ENCODE measurements at regions of chr5 and their contacts with region 1.

Region 1: DNA sequence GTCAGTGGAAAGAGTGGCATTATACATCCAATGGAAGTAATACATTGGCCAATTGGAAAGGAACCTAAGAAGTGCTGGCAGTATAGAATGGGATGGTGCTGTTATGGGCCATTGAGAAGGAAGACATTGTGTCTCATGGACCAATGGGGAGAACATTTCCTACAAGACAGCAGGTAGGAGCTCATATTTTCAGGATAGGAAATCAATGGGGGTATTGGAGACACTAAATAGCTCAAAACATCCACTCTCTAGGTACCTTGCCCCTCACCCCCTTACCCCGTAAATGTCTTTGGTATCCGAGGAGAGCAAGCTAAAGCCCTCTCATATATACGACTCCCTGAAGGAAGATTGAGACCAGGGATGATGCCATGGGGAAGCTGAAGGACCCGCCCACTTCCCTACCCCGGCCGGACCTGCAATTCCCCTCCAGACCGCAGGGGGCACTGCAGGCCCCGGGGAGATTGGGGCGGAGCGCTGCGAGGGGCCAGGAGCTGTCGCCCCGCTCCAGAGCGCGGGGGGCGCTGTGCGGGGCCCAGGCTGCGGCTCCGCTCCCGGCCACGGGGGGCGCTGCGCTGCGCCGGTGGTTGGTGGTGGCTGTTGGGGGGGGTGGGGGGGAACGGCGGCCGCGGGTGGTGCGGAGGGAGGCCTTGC is at the start of gene KDM3B:
- DNase-seq: peak; percentile 94
- ATAC-seq: peak; percentile 76
- H3K4me3 Mint-ChIP-seq: peak within 1 kb of the TSS; percentile 99
- H3K27ac Mint-ChIP-seq: peak within 1 kb of the TSS; percentile 96
- H3K4me1 Mint-ChIP-seq: peaks cover 44% of the 10 kb centered on the region
- H3K27me3 Mint-ChIP-seq: no peaks in the 10 kb centered on the region
- total RNA-seq, gene KDM3B: 39.0 to 40.9 TPM

Region 2: GRCh38 chr5:138000102-138000723 is 352.0 kb before region 1 on chr5:
- CTCF ChIA-PET with region 1: no interaction called
- POLR2A ChIA-PET with region 1: no interaction called
- intact Hi-C with region 1: no loop called
- DNase-seq: no peak
- ATAC-seq: no peak
- H3K4me3 Mint-ChIP-seq: no peak overlapping the region
- H3K27ac Mint-ChIP-seq: no peak overlapping the region
- H3K4me1 Mint-ChIP-seq: peaks cover 37% of the 10 kb centered on the region
- H3K27me3 Mint-ChIP-seq: no peaks in the 10 kb centered on the region

Region 3: DNA sequence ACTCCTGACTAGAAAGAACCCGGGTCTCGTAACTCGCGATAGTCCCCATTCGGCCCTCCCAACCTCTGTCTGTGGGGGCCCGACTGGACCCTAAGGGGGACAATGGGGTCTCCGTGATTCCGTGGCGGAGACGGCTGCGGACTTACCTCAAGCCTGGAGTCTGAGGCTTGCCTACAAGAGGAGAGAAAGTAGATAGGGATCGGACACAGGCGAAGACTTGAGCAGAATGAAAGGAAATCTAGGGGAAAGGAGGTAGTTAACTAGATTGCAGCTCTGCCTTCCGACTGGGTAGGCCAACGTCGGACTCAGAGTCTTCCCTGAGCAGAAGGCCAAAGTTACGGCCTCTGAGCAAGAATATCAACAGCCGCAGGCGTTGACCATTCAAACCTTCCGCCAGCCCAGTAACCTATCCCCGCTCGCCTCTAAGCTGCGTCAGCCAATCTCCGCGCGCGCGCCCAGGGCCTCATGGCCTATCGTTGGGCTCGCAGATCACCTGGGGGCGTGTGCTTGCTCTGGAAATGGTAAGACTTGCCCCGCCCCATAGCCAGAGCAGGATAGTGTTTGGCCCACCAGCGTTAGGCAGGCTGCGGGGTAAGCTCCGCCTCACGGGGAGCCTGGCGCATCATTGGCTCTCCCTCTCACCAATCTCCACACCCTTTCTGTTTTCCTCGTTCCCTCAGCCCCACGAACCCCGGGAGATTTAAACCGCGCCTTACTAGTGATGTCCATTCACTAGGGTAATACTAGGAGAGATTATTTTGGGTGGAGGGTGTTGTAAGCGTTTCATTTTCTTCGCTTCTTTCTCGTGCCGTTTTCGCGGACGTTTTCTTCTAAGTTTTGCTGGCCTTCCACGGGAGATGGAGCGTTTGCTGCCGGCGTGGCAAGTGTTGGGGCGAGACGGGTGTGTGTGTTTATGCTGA is 20.5 kb before region 1 on chr5 and contains the start of gene CDC25C:
- CTCF ChIA-PET with region 1: interaction called, 308 read pairs
- POLR2A ChIA-PET with region 1: interaction called, 73 read pairs
- intact Hi-C with region 1: loop called (anchors 1 to 2 kb)
- DNase-seq: peak; percentile 98
- ATAC-seq: peak; percentile 100
- H3K4me3 Mint-ChIP-seq: peak within 1 kb of the TSS; percentile 86
- H3K27ac Mint-ChIP-seq: peak within 1 kb of the TSS; percentile 87
- H3K4me1 Mint-ChIP-seq: peaks cover 22% of the 10 kb centered on the region
- H3K27me3 Mint-ChIP-seq: no peaks in the 10 kb centered on the region
- total RNA-seq, gene CDC25C: 15.9 to 19.0 TPM

Region 4: DNA sequence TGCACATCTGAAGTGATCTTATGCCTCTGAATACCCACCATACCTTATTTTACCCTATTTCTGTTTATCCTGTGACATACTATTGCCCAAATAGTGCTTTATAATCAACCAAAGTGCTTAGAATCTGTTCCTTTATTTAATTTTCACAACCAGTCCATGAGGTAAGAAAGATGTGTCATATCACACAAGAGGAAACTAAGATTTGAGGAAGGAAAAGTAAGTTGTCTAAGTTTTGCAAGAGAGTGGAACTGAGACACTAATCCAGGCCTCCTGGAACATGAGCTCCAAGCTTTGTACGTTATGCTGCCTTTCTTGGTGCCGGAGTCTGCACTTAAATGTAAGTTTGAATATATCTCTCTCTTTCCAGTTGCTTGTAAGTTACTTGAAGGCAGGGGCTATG is 17.5 kb after region 1 on chr5:
- CTCF ChIA-PET with region 1: interaction called, 64 read pairs
- POLR2A ChIA-PET with region 1: no interaction called
- intact Hi-C with region 1: no loop called
- DNase-seq: no peak
- ATAC-seq: no peak
- H3K4me3 Mint-ChIP-seq: no peak overlapping the region
- H3K27ac Mint-ChIP-seq: peak overlapping the region; percentile 29
- H3K4me1 Mint-ChIP-seq: peaks cover 40% of the 10 kb centered on the region
- H3K27me3 Mint-ChIP-seq: no peaks in the 10 kb centered on the region

Region 5: GRCh38 chr5:139197710-139198669 is 845.8 kb after region 1 on chr5 and contains the start of gene SIL1:
- CTCF ChIA-PET with region 1: interaction called, 4 read pairs
- POLR2A ChIA-PET with region 1: no interaction called
- intact Hi-C with region 1: loop called in 1 of 2 experiments (anchors 10 kb)
- DNase-seq: peak; percentile 98
- ATAC-seq: peak; percentile 100
- H3K4me3 Mint-ChIP-seq: peak within 1 kb of the TSS; percentile 90
- H3K27ac Mint-ChIP-seq: peak within 1 kb of the TSS; percentile 97
- H3K4me1 Mint-ChIP-seq: peaks cover 18% of the 10 kb centered on the region
- H3K27me3 Mint-ChIP-seq: peaks cover 2% of the 10 kb centered on the region
- total RNA-seq, gene SIL1: 11.2 to 14.4 TPM

Region 6: GRCh38 chr5:140113699-140114263 is 1761.6 kb after region 1 on chr5 and contains the start of gene PURA:
- CTCF ChIA-PET with region 1: no interaction called
- POLR2A ChIA-PET with region 1: no interaction called
- intact Hi-C with region 1: loop called in 1 of 2 experiments (anchors 10 kb)
- DNase-seq: peak; percentile 98
- ATAC-seq: peak; percentile 92
- H3K4me3 Mint-ChIP-seq: peak within 1 kb of the TSS; percentile 89
- H3K27ac Mint-ChIP-seq: peak within 1 kb of the TSS; percentile 84
- H3K4me1 Mint-ChIP-seq: peaks cover 65% of the 10 kb centered on the region
- H3K27me3 Mint-ChIP-seq: peaks cover 3% of the 10 kb centered on the region
- total RNA-seq, gene PURA: 9.5 to 10.7 TPM

Measured in activated CD4-positive, alpha-beta T cell treated with anti-CD3 and anti-CD28 coated beads for 36 hours (primary cell).